Activated T-helper 2 cell treated with anti-CD3 and anti-CD28 coated beads, Interferon-gamma antibody, Interleukin-2, Interleukin-4, amounts not matched to agents 10 μg/mL and 5 μg/mL and 100 μg/mL, durations not matched to agents 14 hours and 24 hours and 36 hours (primary cell): ENCODE measurements at regions of chr1 and their contacts with region 1.

Region 1: GRCh38 chr1:41919764-41920397 is 1.2 kb upstream of the HIVEP3 start:
- DNase-seq: peak; percentile 85
- H3K4me3 Mint-ChIP-seq: peak overlapping the region; percentile 87
- H3K27ac Mint-ChIP-seq: peak overlapping the region; percentile 83
- H3K4me1 Mint-ChIP-seq: peaks cover 53% of the 10 kb centered on the region
- H3K27me3 Mint-ChIP-seq: peaks cover 15% of the 10 kb centered on the region

Region 2: GRCh38 chr1:41371630-41372599 is 548.0 kb before region 1 on chr1:
- intact Hi-C with region 1: no loop called
- DNase-seq: no peak
- H3K4me3 Mint-ChIP-seq: no peak overlapping the region
- H3K27ac Mint-ChIP-seq: no peak overlapping the region
- H3K4me1 Mint-ChIP-seq: no peaks in the 10 kb centered on the region
- H3K27me3 Mint-ChIP-seq: peaks cover 39% of the 10 kb centered on the region

Region 3: DNA sequence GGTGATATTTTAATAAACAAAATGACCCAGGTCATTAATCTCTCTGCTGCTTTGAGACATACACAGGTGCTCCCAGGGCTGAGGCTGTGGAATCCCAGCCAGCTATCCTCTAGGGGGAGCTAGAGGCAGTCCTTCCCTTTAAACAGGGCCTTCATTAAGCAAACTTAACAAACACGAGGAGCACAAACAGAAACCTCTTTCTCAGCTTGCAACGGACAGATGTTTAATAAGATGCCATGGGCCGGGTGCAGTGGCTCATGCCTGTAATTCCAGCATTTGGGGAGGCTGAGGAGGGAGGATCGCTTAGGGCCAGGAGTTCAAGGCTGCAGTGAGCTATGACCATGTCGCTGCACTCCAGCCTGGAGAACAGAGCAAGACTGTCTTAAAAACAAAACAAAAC is 107.8 kb before region 1 on chr1:
- intact Hi-C with region 1: loop called (anchors 10 kb)
- DNase-seq: peak; percentile 49
- H3K4me3 Mint-ChIP-seq: no peak overlapping the region
- H3K27ac Mint-ChIP-seq: no peak overlapping the region
- H3K4me1 Mint-ChIP-seq: peaks cover 49% of the 10 kb centered on the region
- H3K27me3 Mint-ChIP-seq: no peaks in the 10 kb centered on the region

Region 4: GRCh38 chr1:41891199-41891896 is 28.5 kb before region 1 on chr1:
- intact Hi-C with region 1: loop called (anchors 2 kb)
- DNase-seq: peak; percentile 61
- H3K4me3 Mint-ChIP-seq: peak overlapping the region; percentile 83
- H3K27ac Mint-ChIP-seq: peak overlapping the region; percentile 96
- H3K4me1 Mint-ChIP-seq: peaks cover 36% of the 10 kb centered on the region
- H3K27me3 Mint-ChIP-seq: no peaks in the 10 kb centered on the region

Region 5: DNA sequence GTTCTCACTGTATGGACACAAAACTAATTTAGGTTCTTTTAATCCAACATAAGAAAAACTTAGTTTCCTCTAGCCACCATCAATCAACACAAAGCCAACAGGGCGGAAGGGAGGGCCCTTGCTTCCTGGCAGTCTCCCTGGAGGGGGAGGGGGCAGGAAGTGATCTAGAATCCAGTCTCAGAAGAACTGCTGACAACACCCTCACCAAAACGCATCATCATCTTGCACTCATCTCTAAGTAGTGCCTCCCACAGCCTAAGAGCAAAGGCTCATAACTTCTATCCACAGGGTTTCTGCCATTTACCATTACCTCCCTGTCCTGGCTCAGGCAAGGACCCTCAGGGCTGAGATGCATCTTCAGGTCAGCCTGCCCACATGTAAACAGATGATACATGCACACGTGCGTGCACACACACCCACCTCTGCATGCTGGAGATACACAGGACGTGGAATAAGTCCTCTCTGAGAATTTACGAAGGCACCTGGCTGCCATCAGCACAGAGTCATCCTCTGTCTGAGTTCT is 21.6 kb before region 1 on chr1:
- intact Hi-C with region 1: loop called (anchors 2 kb)
- DNase-seq: peak; percentile 75
- H3K4me3 Mint-ChIP-seq: peak overlapping the region; percentile 45
- H3K27ac Mint-ChIP-seq: peak overlapping the region; percentile 91
- H3K4me1 Mint-ChIP-seq: peaks cover 57% of the 10 kb centered on the region
- H3K27me3 Mint-ChIP-seq: no peaks in the 10 kb centered on the region

Region 6: GRCh38 chr1:41954516-41954944 is 34.6 kb after region 1 on chr1:
- intact Hi-C with region 1: no loop called
- DNase-seq: no peak
- H3K4me3 Mint-ChIP-seq: no peak overlapping the region
- H3K27ac Mint-ChIP-seq: no peak overlapping the region
- H3K4me1 Mint-ChIP-seq: peaks cover 14% of the 10 kb centered on the region
- H3K27me3 Mint-ChIP-seq: no peaks in the 10 kb centered on the region

Region 7: DNA sequence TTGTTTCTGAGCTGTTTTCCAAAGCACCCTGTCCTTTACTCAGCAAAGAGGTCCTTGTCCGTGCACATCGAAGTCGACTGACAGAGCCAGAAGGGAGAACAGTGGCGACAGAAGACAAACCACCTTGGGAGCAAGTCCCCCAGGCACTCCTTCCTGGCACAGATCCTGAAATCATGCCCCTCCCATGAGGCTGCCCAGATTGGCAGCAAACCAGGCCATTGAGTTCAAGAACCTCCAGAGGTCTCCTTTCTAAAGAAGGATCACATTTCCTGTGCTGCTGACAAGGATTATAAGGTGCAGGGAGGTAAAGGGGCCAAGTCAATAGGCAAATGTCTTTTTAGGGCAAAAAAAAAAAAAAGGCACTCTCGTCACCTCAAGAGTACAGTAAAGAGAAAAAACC is 83.6 kb after region 1 on chr1:
- intact Hi-C with region 1: no loop called
- DNase-seq: no peak
- H3K4me3 Mint-ChIP-seq: no peak overlapping the region
- H3K27ac Mint-ChIP-seq: no peak overlapping the region
- H3K4me1 Mint-ChIP-seq: peaks cover 1% of the 10 kb centered on the region
- H3K27me3 Mint-ChIP-seq: no peaks in the 10 kb centered on the region

Region 8: GRCh38 chr1:42035830-42036604 is 116.1 kb after region 1 on chr1:
- intact Hi-C with region 1: loop called (anchors 10 kb)
- DNase-seq: peak; percentile 94
- H3K4me3 Mint-ChIP-seq: peak overlapping the region; percentile 78
- H3K27ac Mint-ChIP-seq: no peak overlapping the region
- H3K4me1 Mint-ChIP-seq: peaks cover 17% of the 10 kb centered on the region
- H3K27me3 Mint-ChIP-seq: peaks cover 14% of the 10 kb centered on the region

Region 9: GRCh38 chr1:42096554-42096953 is 176.7 kb after region 1 on chr1:
- intact Hi-C with region 1: no loop called
- DNase-seq: no peak
- H3K4me3 Mint-ChIP-seq: no peak overlapping the region
- H3K27ac Mint-ChIP-seq: no peak overlapping the region
- H3K4me1 Mint-ChIP-seq: no peaks in the 10 kb centered on the region
- H3K27me3 Mint-ChIP-seq: peaks cover 9% of the 10 kb centered on the region